Activated naive CD8-positive, alpha-beta T cell treated with anti-CD3 and anti-CD28 coated beads, Interleukin-2, amount 10 ng/mL, durations not matched to agents 7 days and 5 days (primary cell): ENCODE measurements at regions of chr2 and their contacts with region 1.

Region 1: DNA sequence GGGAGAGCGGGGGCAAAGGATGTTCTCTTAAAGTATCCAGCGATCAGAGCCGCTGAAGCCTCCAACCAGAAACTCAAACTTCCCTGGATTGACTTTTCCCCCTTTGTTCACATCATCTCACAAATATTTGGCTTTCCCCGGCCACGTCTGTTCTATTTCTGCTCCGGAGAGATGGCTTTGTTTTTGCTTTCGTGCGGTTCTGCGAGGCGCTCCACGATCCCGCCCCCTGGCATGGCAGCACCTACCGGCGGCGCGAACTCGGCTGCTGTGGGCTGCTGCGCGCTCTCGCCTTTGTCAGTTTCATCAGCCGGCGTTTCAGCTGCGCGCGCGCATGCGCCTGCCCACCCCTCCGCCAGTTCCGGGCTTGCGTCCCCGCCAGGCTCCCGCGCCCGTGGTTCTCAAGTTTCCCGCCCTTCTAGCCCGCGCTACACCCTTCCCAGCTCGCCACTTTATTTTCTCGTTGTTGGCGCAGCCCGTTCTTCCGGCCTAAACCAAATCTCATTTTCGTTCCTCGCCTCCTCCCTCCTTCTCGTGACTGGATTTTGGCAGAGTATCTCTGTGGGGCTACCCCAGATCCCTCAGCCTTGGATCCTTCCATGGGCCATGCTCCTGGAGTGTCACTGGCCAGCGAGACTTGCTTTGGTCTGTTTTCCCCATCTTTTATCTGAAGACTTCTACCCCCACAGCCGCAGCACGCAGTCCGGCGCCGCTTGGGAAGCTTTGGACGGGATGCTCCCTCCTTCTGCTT is 98.0 kb downstream of the INSIG2 start:
- DNase-seq: peak; percentile 88
- ATAC-seq: peak; percentile 94
- H3K4me3 Mint-ChIP-seq: peak overlapping the region; percentile 94
- H3K27ac Mint-ChIP-seq: peak overlapping the region; percentile 97
- H3K4me1 Mint-ChIP-seq: peaks cover 18% of the 10 kb centered on the region
- H3K27me3 Mint-ChIP-seq: peaks cover 4% of the 10 kb centered on the region

Region 2: GRCh38 chr2:118013724-118014491 is 172.4 kb before region 1 on chr2 and contains the start of gene CCDC93:
- POLR2A ChIA-PET with region 1: interaction called, 12 read pairs
- DNase-seq: peak; percentile 93
- ATAC-seq: peak; percentile 90
- H3K4me3 Mint-ChIP-seq: peak within 1 kb of the TSS; percentile 95
- H3K27ac Mint-ChIP-seq: peak within 1 kb of the TSS; percentile 82
- H3K4me1 Mint-ChIP-seq: peaks cover 35% of the 10 kb centered on the region
- H3K27me3 Mint-ChIP-seq: no peaks in the 10 kb centered on the region
- total RNA-seq, gene CCDC93: 37.5 to 38.7 TPM

Region 3: DNA sequence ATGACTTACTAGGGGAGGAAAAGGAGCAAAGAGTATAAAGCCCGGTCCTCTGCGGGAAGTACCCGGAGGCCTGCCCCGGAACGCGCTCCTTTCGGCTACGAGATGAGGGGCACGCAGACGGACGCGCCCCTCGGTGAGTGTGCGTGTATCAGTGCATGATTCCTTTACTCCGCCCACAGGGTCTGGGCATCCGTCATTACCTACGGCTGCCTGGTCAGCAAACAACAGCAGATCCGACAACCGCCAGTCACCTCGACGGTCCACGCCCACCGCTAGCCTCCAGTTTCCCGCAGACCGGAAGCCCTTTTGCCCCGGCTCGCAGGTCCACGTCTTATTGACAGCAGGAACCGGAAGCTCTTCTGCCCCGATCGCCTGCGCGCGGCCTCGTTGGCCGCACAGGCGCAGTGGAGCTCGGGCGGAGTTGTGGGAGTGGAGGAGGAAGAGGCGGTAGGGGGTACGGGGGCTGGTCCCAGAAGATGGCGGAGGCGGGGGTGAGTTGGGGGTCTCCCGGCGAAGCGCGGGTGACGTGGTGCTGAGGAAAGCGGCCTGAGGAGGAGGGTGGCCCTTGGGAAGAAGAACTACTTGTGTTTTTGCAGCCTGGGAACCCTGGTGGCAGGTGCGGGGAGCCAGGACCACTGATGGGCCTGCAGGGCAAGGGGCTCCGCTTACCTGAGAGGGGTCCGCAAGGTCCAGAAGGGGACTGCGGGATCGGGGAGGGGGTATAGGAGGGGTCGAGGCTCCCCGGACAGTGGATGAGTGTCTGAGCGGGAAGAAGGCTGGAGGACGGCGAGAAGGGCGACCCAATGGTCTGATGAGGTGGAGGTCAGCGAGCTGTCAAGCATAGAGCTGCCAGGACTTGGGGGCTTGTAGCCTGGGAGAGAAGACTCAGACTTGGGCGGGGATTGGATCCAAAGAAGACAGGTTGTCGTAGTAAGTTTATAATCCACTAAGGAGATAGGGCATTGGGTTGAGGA is 97.9 kb before region 1 on chr2 and contains the start of gene INSIG2:
- POLR2A ChIA-PET with region 1: interaction called, 10 read pairs
- DNase-seq: peak; percentile 90
- ATAC-seq: peak; percentile 96
- H3K4me3 Mint-ChIP-seq: peak within 1 kb of the TSS; percentile 96
- H3K27ac Mint-ChIP-seq: peak within 1 kb of the TSS; percentile 93
- H3K4me1 Mint-ChIP-seq: peaks cover 19% of the 10 kb centered on the region
- H3K27me3 Mint-ChIP-seq: peaks cover 4% of the 10 kb centered on the region
- total RNA-seq, gene INSIG2: 29.0 to 30.6 TPM